ENCODE measurements at regions of chr9 and their contacts with region 1.

Region 1: GRCh38 chr9:86637515-86637914 is 283.3 kb upstream of the TUT7 start:
- DNase-seq: no peak
- H3K4me3 ChIP-seq: no peak overlapping the region
- H3K27ac ChIP-seq: no peak overlapping the region
- H3K4me1 ChIP-seq: no peaks in the 10 kb centered on the region
- H3K27me3 ChIP-seq: no peaks in the 10 kb centered on the region
- CTCF ChIP-seq: peak; percentile 34 to 83

Region 2: DNA sequence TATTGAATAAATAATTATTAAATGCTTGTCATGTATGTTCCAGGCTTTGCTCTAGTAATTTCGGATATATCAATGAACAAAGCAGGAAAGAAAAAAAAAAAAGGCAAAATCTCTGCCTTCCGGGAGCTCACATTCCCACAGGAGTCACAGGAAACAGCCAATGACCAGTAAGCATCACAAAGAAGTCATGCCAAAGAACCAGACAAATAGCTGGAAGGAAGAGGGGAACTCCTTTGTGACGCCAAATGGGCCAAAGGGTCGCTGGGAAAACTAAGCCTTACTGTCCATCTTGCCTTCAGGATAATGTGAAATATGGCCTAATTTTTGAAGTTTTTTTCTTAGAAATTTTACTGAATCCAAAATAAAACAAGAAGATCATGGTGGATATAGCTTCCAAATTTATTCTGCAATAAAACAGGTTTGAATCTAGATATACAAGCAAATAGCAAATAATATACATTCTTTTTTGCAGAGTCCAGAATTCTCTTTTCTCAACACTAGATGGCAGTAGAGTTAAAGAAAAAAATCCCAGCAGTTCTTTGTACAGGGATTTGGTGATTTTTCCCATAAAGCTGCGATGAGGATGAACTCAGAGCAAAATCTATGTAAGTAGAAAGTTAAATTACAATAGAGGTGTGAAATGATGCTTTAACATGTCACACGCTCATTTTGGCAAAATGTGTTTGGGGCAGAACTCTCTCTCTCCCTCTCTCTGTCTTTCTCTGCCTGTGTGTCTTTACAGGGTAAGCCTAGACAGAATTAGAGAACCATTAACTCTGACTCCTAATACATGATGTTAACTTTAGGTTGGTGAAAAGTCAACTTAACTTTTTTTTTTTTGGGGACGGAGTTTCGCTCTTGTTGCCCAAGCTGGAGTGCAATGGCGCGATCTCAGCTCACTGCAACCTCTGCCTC is 223.3 kb before region 1 on chr9:
- CTCF ChIA-PET with region 1: no interaction called
- dilution Hi-C with region 1: no loop called
- in situ Hi-C with region 1: no loop called
- intact Hi-C with region 1: loop called (anchors 5 kb)
- DNase-seq: no peak
- H3K4me3 ChIP-seq: no peak overlapping the region
- H3K27ac ChIP-seq: no peak overlapping the region
- H3K4me1 ChIP-seq: no peaks in the 10 kb centered on the region
- H3K27me3 ChIP-seq: no peaks in the 10 kb centered on the region
- CTCF ChIP-seq: peak; percentile 59 to 61

Region 3: DNA sequence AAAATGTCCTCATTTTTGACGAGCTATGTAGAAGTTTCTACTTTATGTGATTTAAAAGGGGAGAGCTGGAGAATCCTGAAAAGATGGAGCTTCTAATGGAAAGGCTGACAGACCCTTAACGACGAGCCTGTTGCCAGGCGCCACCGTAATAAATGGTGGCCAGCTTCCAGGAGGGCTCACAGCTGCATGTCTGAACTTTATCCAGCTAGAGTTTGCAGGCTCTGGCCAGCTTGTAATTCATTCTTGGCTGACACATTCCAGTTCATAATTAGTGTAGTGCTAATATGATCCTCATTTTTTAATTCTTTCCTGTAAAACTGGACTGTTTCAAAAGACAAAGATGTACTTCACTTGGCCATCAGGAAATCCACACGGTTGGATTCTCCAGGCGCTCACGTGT is 63.1 kb after region 1 on chr9:
- CTCF ChIA-PET with region 1: no interaction called
- dilution Hi-C with region 1: no loop called
- in situ Hi-C with region 1: loop called in 1 of 2 experiments (anchors 10 kb)
- intact Hi-C with region 1: loop called (anchors 10 kb)
- DNase-seq: peak; percentile 20
- H3K4me3 ChIP-seq: no peak overlapping the region
- H3K27ac ChIP-seq: no peak overlapping the region
- H3K4me1 ChIP-seq: peaks cover 15% of the 10 kb centered on the region
- H3K27me3 ChIP-seq: no peaks in the 10 kb centered on the region
- CTCF ChIP-seq: no peak

Region 4: GRCh38 chr9:86792134-86792533 is 154.6 kb after region 1 on chr9:
- CTCF ChIA-PET with region 1: no interaction called
- dilution Hi-C with region 1: no loop called
- in situ Hi-C with region 1: no loop called
- intact Hi-C with region 1: loop called (anchors 2 kb)
- DNase-seq: peak; percentile 88
- H3K4me3 ChIP-seq: no peak overlapping the region
- H3K27ac ChIP-seq: no peak overlapping the region
- H3K4me1 ChIP-seq: no peaks in the 10 kb centered on the region
- H3K27me3 ChIP-seq: no peaks in the 10 kb centered on the region
- CTCF ChIP-seq: no peak

Region 5: GRCh38 chr9:86854898-86855523 is 217.5 kb after region 1 on chr9:
- CTCF ChIA-PET with region 1: no interaction called
- dilution Hi-C with region 1: no loop called
- in situ Hi-C with region 1: no loop called
- intact Hi-C with region 1: loop called (anchors 10 kb)
- DNase-seq: peak; percentile 68
- H3K4me3 ChIP-seq: no peak overlapping the region
- H3K27ac ChIP-seq: no peak overlapping the region
- H3K4me1 ChIP-seq: peaks cover 15% of the 10 kb centered on the region
- H3K27me3 ChIP-seq: no peaks in the 10 kb centered on the region
- CTCF ChIP-seq: no peak

Measured in mammary epithelial cell (primary cell).